B cell (primary cell): ENCODE measurements at regions of chr2 and their contacts with region 1.

Region 1: GRCh38 chr2:168626096-168626495 is 170.0 kb downstream of the CERS6 start:
- DNase-seq: peak; percentile 35
- ATAC-seq: peak; percentile 31
- H3K4me3 ChIP-seq: no peak overlapping the region
- H3K4me3 Mint-ChIP-seq: peak overlapping the region; percentile 46
- H3K27ac ChIP-seq: peak overlapping the region in 1 of 2 donors; percentile 2
- H3K27ac Mint-ChIP-seq: peak overlapping the region; percentile 73
- H3K4me1 ChIP-seq: peaks cover 16 to 24% of the 10 kb centered on the region in 2 donors
- H3K4me1 Mint-ChIP-seq: peaks cover 35% of the 10 kb centered on the region
- H3K27me3 ChIP-seq: no peaks in the 10 kb centered on the region
- H3K27me3 Mint-ChIP-seq: no peaks in the 10 kb centered on the region
- CTCF ChIP-seq: no peak

Region 2: DNA sequence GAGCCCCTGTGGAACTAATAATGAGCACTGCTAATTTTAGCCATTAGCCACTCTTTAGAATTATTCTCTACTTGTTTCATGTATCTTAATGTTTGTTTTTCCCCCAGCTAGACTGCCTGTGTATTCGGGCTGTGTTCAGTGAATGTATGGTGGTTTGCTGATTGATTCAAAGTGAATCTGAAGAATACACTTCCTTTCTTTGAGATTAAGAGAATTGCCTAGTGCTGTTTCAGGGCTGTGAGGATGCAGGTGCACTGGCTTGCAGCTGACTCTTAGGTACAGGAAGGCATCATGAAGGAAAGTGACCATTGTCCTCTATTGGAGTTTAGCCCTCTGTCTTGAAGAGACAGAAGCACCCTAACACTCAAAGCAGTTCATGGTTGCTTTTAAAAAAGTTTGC is 31.3 kb before region 1 on chr2:
- CTCF ChIA-PET with region 1: no interaction called
- POLR2A ChIA-PET with region 1: no interaction called
- intact Hi-C with region 1: loop called (anchors 5 kb)
- DNase-seq: no peak
- ATAC-seq: no peak
- H3K4me3 ChIP-seq: no peak overlapping the region
- H3K4me3 Mint-ChIP-seq: no peak overlapping the region
- H3K27ac ChIP-seq: no peak overlapping the region
- H3K27ac Mint-ChIP-seq: peak overlapping the region; percentile 33
- H3K4me1 ChIP-seq: peaks cover 11 to 13% of the 10 kb centered on the region in 2 donors
- H3K4me1 Mint-ChIP-seq: peaks cover 38% of the 10 kb centered on the region
- H3K27me3 ChIP-seq: no peaks in the 10 kb centered on the region
- H3K27me3 Mint-ChIP-seq: no peaks in the 10 kb centered on the region
- CTCF ChIP-seq: no peak

Region 3: DNA sequence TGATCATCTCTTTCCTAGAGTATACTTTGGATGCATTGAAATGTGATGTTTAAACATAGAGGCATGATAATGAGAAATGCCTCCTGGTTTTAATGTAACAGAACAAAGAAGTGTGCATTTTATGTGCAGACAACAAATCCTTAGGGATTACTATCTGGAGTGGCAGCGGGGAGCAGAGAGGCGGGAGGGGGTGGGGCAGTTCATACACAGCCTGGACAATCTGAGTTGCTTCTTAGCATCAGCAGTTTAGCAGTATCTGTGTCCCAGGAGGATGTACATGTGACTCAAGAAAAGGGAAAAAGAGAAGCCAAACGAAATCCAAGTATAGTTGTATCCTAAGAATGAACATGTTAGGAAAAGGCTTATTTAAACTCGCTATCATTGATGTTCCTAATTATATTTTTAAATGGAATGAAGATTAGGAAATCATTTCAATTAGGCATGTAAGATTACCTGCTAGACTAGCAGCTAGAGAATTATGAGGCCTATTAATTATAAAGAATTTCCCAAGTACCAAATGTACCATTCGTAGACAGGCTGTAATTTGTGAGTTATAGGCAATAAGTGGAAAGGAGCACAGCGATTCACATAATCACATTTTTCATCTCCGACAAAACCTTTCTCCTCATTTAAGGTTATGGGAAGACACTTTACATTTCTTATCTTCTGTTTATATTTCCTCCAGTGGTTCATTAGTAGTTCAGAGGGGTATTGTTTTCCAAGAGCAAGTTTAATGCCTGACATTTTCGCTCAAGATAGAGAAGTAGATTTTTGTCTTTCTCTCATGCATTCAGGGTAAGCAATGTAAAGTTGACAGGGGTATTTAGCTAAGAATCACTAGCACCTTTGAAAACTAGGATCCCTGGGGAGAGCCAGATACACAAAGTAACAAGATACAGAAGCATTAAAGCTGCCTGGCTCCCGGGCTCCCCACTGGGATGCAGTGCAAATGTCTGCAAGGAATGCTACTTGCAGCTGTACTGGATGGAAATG is 35.1 kb after region 1 on chr2:
- CTCF ChIA-PET with region 1: no interaction called
- POLR2A ChIA-PET with region 1: no interaction called
- intact Hi-C with region 1: no loop called
- DNase-seq: no peak
- ATAC-seq: no peak
- H3K4me3 ChIP-seq: no peak overlapping the region
- H3K4me3 Mint-ChIP-seq: no peak overlapping the region
- H3K27ac ChIP-seq: no peak overlapping the region
- H3K27ac Mint-ChIP-seq: no peak overlapping the region
- H3K4me1 ChIP-seq: no peaks in the 10 kb centered on the region
- H3K4me1 Mint-ChIP-seq: no peaks in the 10 kb centered on the region
- H3K27me3 ChIP-seq: no peaks in the 10 kb centered on the region
- H3K27me3 Mint-ChIP-seq: no peaks in the 10 kb centered on the region
- CTCF ChIP-seq: no peak